Lower lobe of right lung (tissue), 2 donors: ENCODE measurements at regions of chr2 and their contacts with region 1.

Region 1: DNA sequence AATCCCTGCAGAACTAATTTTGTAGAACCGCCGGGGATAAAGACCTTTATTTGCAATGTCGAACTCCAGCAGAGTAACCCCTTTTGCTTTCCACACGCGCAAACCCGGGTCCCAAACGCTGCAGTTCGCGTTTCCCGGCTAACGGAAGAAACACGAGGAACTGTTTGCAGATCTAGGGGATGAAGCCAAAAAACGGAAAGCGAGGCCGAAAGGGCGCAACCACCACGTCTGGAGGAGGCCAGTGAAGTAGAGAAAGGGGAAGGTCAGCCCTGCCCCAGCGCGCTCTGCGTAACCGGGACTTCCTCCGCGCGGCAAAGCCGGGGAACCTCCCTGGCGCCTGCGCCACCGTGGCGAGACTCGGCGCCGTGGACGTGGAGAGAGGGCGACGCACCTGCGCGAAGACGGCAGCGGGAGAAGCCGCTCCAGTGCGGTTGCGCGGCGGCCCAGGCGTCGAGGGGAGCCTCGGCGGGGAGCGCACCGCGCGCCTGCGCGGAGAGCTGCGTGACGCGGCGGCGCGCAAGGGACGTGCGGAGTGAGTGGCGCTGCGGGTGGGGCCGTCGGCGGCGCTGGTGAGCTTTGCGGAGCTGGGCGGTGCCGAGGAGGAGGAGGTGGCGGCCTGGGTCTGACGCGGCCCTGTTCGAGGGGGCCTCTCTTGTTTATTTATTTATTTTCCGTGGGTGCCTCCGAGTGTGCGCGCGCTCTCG is at the start of gene PPP1CB:
- DNase-seq: peak; percentile 98
- ATAC-seq: peak; percentile 96 to 98
- H3K4me3 ChIP-seq: peak within 1 kb of the TSS; percentile 80
- H3K27ac ChIP-seq: peak within 1 kb of the TSS; percentile 96
- H3K4me1 ChIP-seq: peaks cover 44% of the 10 kb centered on the region
- H3K27me3 ChIP-seq: no peaks in the 10 kb centered on the region
- CTCF ChIP-seq: peak; percentile 46
- total RNA-seq, gene PPP1CB: 233 TPM

Region 2: GRCh38 chr2:28594289-28595108 is 156.9 kb before region 1 on chr2:
- intact Hi-C with region 1: loop called (anchors 10 kb)
- DNase-seq: peak; percentile 92
- ATAC-seq: peak; percentile 89 to 90
- H3K4me3 ChIP-seq: no peak overlapping the region
- H3K27ac ChIP-seq: peak overlapping the region; percentile 68
- H3K4me1 ChIP-seq: peaks cover 13% of the 10 kb centered on the region
- H3K27me3 ChIP-seq: no peaks in the 10 kb centered on the region
- CTCF ChIP-seq: peak; percentile 87

Region 3: DNA sequence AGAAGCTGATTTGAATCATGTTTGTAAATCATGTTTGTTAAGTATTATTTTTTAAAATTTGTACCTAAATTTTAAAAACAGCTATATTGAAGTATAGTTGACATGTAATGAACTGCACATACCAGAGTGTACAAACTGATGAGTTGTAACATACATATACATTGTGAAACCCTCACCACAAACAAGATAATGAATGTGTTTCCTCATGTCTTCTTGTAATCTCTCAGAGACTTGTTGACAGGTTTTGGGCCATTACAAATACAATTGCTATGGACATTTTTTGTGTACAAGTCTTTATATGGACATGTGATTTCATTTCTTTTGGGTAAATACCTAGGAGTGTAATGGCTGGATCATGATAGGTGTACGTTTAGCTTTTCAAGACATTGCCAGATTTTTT is 164.5 kb after region 1 on chr2:
- intact Hi-C with region 1: no loop called
- DNase-seq: no peak
- ATAC-seq: no peak
- H3K4me3 ChIP-seq: no peak overlapping the region
- H3K27ac ChIP-seq: no peak overlapping the region
- H3K4me1 ChIP-seq: no peaks in the 10 kb centered on the region
- H3K27me3 ChIP-seq: no peaks in the 10 kb centered on the region
- CTCF ChIP-seq: no peak